CD4-positive, alpha-beta memory T cell (primary cell): ENCODE measurements at regions of chr13 and their contacts with region 1.

Region 1: GRCh38 chr13:48448959-48449614 is 36.2 kb upstream of the LPAR6 start:
- DNase-seq: no peak
- H3K4me3 ChIP-seq: no peak overlapping the region
- H3K4me3 Mint-ChIP-seq: peak overlapping the region; percentile 66 to 83 (median 79)
- H3K27ac ChIP-seq: no peak overlapping the region
- H3K27ac Mint-ChIP-seq: peak overlapping the region; percentile 19 to 80 (median 42)
- H3K4me1 ChIP-seq: peaks cover 31% of the 10 kb centered on the region
- H3K4me1 Mint-ChIP-seq: peaks cover 13 to 36% (median 24%) of the 10 kb centered on the region in 4 donors
- H3K27me3 ChIP-seq: no peaks in the 10 kb centered on the region
- H3K27me3 Mint-ChIP-seq: no peaks in the 10 kb centered on the region

Region 2: GRCh38 chr13:48412881-48413351 is 36.2 kb before region 1 on chr13 and contains the start of gene LPAR6:
- CTCF ChIA-PET with region 1: no interaction called
- POLR2A ChIA-PET with region 1: interaction called, 4 read pairs
- intact Hi-C with region 1: loop called (anchors 5 kb)
- DNase-seq: peak; percentile 45 to 59 (median 47)
- H3K4me3 ChIP-seq: peak within 1 kb of the TSS; percentile 67 to 90
- H3K4me3 Mint-ChIP-seq: peak within 1 kb of the TSS; percentile 89 to 100 (median 98)
- H3K27ac ChIP-seq: peak within 1 kb of the TSS; percentile 84
- H3K27ac Mint-ChIP-seq: peak within 1 kb of the TSS; percentile 94 to 99 (median 98)
- H3K4me1 ChIP-seq: peaks cover 50% of the 10 kb centered on the region
- H3K4me1 Mint-ChIP-seq: peaks cover 18 to 50% (median 36%) of the 10 kb centered on the region in 4 donors
- H3K27me3 ChIP-seq: no peaks in the 10 kb centered on the region
- H3K27me3 Mint-ChIP-seq: no peaks in the 10 kb centered on the region
- total RNA-seq, gene LPAR6: 89.0 to 91.1 TPM

Region 3: GRCh38 chr13:48431987-48432615 is 17.0 kb before region 1 on chr13:
- CTCF ChIA-PET with region 1: no interaction called
- POLR2A ChIA-PET with region 1: interaction called, 6 read pairs
- intact Hi-C with region 1: loop called (anchors 2 kb)
- DNase-seq: no peak
- H3K4me3 ChIP-seq: no peak overlapping the region
- H3K4me3 Mint-ChIP-seq: peak overlapping the region in 7 of 8 donors; percentile 12 to 85 (median 58)
- H3K27ac ChIP-seq: no peak overlapping the region
- H3K27ac Mint-ChIP-seq: peak overlapping the region; percentile 18 to 90 (median 75)
- H3K4me1 ChIP-seq: peaks cover 69% of the 10 kb centered on the region
- H3K4me1 Mint-ChIP-seq: peaks cover 45 to 63% (median 56%) of the 10 kb centered on the region in 4 donors
- H3K27me3 ChIP-seq: no peaks in the 10 kb centered on the region
- H3K27me3 Mint-ChIP-seq: no peaks in the 10 kb centered on the region

Region 4: GRCh38 chr13:48679911-48680680 is 231.0 kb after region 1 on chr13:
- CTCF ChIA-PET with region 1: no interaction called
- POLR2A ChIA-PET with region 1: no interaction called
- intact Hi-C with region 1: no loop called
- DNase-seq: no peak
- H3K4me3 ChIP-seq: no peak overlapping the region
- H3K4me3 Mint-ChIP-seq: no peak overlapping the region
- H3K27ac ChIP-seq: no peak overlapping the region
- H3K27ac Mint-ChIP-seq: peak overlapping the region in 1 of 7 donors; percentile 69
- H3K4me1 ChIP-seq: peaks cover 10% of the 10 kb centered on the region
- H3K4me1 Mint-ChIP-seq: peaks cover 16 to 30% (median 19%) of the 10 kb centered on the region in 4 donors
- H3K27me3 ChIP-seq: no peaks in the 10 kb centered on the region
- H3K27me3 Mint-ChIP-seq: no peaks in the 10 kb centered on the region